Right cardiac atrium (tissue), 5 donors: ENCODE measurements at regions of chr15 and their contacts with region 1.

Region 1: DNA sequence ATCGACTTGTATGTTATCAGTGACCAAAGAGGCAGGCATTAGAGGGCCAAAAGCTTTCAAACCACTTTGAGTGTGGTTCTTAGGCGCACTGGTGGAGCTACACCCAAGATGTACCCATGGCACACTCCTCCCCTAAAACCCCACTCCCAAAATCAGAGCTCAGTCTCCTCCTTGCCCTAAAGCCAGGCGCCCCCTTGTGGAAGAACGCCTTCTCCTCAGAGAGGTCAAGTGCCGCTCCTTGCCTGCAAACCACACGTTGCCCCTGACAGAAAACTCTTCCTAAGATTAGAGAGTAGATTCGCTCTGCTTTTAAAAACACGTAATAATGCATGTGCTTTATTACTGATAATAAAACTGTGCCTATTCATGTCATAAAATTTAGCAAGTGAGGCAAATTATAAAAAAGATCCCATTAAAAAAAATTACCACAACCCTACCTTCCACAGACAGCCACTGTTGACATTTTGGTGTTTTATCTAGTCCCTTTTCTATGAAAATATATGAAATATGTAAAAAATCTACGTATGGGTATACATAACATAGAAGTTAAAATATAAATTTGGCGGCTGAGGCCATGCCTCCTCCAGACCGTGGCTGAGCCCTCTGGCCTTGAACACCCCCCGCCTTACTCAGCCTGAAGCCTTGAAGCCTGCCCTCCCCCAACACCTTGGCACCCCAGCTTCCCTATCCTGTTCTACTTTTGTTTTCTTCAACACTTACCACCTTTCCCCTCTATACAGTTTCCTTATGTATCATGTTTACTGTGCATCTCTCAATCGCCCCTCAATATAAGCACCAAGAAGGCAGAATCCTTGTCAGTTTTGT is 33.5 kb downstream of the BCL2L10 start:
- DNase-seq: peak; percentile 85 to 95 (median 91)
- ATAC-seq: peak; percentile 87 to 90
- H3K4me3 ChIP-seq: no peak overlapping the region
- H3K27ac ChIP-seq: no peak overlapping the region
- H3K4me1 ChIP-seq: no peaks in the 10 kb centered on the region
- H3K27me3 ChIP-seq: no peaks in the 10 kb centered on the region

Region 2: GRCh38 chr15:51971375-51972133 is 107.5 kb before region 1 on chr15 and contains the start of gene LEO1:
- intact Hi-C with region 1: loop called in 2 of 4 experiments (anchors 10 kb)
- DNase-seq: peak; percentile 89 to 93 (median 92)
- ATAC-seq: peak; percentile 96 to 97
- H3K4me3 ChIP-seq: peak within 1 kb of the TSS; percentile 67
- H3K27ac ChIP-seq: peak within 1 kb of the TSS; percentile 91
- H3K4me1 ChIP-seq: no peaks in the 10 kb centered on the region
- H3K27me3 ChIP-seq: no peaks in the 10 kb centered on the region
- total RNA-seq, gene LEO1: 7.9 to 11.8 (median 10.7) TPM

Region 3: GRCh38 chr15:51982013-51982769 is 96.9 kb before region 1 on chr15:
- intact Hi-C with region 1: loop called (anchors 5 to 10 kb)
- DNase-seq: peak in 1 of 3 donors; percentile 22
- ATAC-seq: peak; percentile 80 to 86
- H3K4me3 ChIP-seq: peak overlapping the region; percentile 44
- H3K27ac ChIP-seq: peak overlapping the region; percentile 70
- H3K4me1 ChIP-seq: peaks cover 2% of the 10 kb centered on the region
- H3K27me3 ChIP-seq: no peaks in the 10 kb centered on the region